ENCODE measurements at regions of chr17 and their contacts with region 1.

Region 1: GRCh38 chr17:5031365-5032082 is 3.7 kb downstream of the SLC52A1 start:
- DNase-seq: peak; percentile 72 to 90
- ATAC-seq: peak; percentile 65

Region 2: DNA sequence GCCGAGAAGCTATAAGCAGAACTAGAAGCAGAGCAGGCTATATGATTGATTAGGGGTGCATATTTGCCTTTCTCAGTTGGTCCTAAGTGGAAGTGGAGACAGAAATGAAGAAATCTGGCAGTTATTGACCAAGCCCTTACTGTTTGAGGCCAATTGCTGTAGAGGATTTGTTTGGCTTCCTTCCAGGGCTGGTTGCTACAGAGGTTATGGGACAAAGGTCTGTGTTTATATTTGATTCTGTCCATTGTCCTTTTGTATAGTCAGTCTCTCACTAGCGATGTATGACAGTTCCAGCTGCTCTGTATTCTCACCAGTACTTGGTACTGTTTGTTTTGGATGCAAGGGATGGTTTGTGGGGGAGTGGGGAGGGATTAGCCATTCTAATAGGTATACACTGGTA is 382.8 kb before region 1 on chr17:
- intact Hi-C with region 1: no loop called
- DNase-seq: peak; percentile 49 to 55
- ATAC-seq: peak; percentile 95

Region 3: GRCh38 chr17:5065227-5065744 is 33.8 kb after region 1 on chr17:
- intact Hi-C with region 1: loop called in 1 of 2 experiments (anchors 2 kb)
- DNase-seq: no peak
- ATAC-seq: no peak

Region 4: DNA sequence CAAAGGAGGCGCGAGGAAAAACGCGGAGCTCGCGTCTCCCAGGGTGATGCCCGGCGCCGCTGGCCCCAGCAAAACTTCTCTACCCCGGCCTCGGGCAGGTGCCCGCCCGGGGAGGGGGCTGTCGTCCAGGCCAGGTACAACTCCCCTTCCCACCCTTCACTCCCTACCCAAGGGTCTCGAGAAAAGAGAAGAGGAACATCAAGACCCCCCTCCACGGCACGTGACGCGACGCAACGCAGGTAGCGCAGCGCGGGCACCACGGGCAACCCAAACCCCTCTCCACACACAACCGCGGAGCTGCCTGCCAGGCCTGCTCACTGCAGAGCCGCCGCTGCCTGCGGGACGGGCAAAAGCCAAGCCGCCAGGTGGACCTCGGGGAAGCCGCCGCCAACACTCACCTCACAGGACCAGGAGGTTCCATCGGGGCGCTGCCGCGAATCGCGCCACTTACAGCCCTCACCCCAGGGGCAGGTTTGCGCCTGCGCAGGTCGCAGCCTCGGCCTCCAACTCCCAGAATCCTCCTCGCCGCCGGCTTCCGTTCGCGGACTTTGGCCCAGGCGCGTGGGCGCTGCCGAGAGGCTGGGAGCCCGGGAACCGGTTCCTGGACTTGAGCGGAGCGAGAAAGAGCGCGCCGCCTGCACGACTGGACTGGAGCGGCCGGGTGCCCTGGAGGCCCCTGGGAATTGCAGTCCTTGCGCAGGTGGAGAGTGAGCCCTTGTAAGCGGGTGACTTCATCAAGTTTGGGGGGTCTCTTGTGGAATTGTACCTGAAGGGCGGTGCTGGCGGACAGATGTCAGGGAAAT is 80.1 kb after region 1 on chr17 and contains the start of gene ZNF232:
- intact Hi-C with region 1: no loop called
- DNase-seq: peak; percentile 96 to 97
- ATAC-seq: peak; percentile 95
- total RNA-seq, gene ZNF232: 7.1 to 7.7 TPM

Measured in left colon (tissue), 2 donors.